HAP-1 (cell line): ENCODE measurements at regions of chr22 and their contacts with region 1.

Region 1: GRCh38 chr22:37290737-37291136 is 8.4 kb downstream of the CYTH4 start:
- DNase-seq: no peak
- H3K4me3 ChIP-seq: no peak overlapping the region
- H3K4me1 ChIP-seq: no peaks in the 10 kb centered on the region
- H3K27me3 ChIP-seq: peaks cover 14% of the 10 kb centered on the region

Region 2: DNA sequence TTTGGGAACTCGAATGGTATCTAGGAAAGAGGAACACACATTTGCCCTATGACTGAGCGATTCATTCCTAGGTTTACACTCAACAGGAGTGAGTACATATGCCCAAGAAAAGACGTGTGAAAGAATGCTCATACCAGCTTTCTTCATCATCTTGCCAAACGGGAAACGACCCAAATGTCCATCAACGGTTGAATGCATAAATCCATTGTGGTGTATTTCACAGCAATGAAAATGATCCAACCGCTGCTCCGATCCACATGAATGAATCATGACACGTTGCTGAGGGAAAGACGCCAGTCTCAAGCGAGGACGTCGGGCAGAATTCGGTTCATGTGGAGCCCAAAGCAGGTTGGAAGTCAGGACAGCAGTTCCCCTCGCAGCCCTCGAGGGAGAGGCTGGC is 63.1 kb after region 1 on chr22:
- in situ Hi-C with region 1: loop called (anchors 10 kb)
- DNase-seq: no peak
- H3K4me3 ChIP-seq: no peak overlapping the region
- H3K4me1 ChIP-seq: no peaks in the 10 kb centered on the region
- H3K27me3 ChIP-seq: peaks cover 9% of the 10 kb centered on the region

Region 3: GRCh38 chr22:37972527-37972926 is 681.8 kb after region 1 on chr22:
- in situ Hi-C with region 1: no loop called
- DNase-seq: no peak
- H3K4me3 ChIP-seq: no peak overlapping the region
- H3K4me1 ChIP-seq: no peaks in the 10 kb centered on the region
- H3K27me3 ChIP-seq: no peaks in the 10 kb centered on the region